CD4-positive, alpha-beta memory T cell (primary cell): ENCODE measurements at regions of chr20 and their contacts with region 1.

Region 1: GRCh38 chr20:9912858-9913434 is 74.1 kb upstream of the PAK5 start:
- DNase-seq: peak in 2 of 5 donors; percentile 2 to 6
- H3K4me3 ChIP-seq: no peak overlapping the region
- H3K4me3 Mint-ChIP-seq: no peak overlapping the region
- H3K27ac ChIP-seq: no peak overlapping the region
- H3K27ac Mint-ChIP-seq: no peak overlapping the region
- H3K4me1 ChIP-seq: no peaks in the 10 kb centered on the region
- H3K4me1 Mint-ChIP-seq: no peaks in the 10 kb centered on the region
- H3K27me3 ChIP-seq: no peaks in the 10 kb centered on the region
- H3K27me3 Mint-ChIP-seq: peaks cover 2 to 14% of the 10 kb centered on the region in 2 donors

Region 2: GRCh38 chr20:9256393-9256792 is 656.6 kb before region 1 on chr20:
- CTCF ChIA-PET with region 1: no interaction called
- POLR2A ChIA-PET with region 1: no interaction called
- intact Hi-C with region 1: no loop called
- DNase-seq: no peak
- H3K4me3 ChIP-seq: no peak overlapping the region
- H3K4me3 Mint-ChIP-seq: no peak overlapping the region
- H3K27ac ChIP-seq: no peak overlapping the region
- H3K27ac Mint-ChIP-seq: no peak overlapping the region
- H3K4me1 ChIP-seq: no peaks in the 10 kb centered on the region
- H3K4me1 Mint-ChIP-seq: no peaks in the 10 kb centered on the region
- H3K27me3 ChIP-seq: no peaks in the 10 kb centered on the region
- H3K27me3 Mint-ChIP-seq: no peaks in the 10 kb centered on the region

Region 3: DNA sequence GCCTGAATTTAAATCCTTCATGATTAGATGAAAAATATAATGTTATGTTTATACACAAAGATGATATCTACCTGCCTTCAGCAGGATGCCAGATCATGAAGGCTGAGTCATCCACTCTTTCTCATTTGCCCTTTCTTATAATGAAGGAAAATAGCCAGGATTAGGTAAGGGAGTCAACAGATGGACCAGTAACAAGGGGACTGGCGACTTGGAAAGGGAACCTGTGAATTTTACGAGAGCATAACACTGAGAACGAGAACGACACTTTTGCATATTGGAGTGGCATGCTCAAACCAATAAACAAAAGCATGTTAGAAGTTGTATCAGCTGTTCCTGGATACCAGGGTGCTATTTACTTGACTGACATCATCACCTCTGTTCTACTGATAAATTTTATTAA is 244.6 kb before region 1 on chr20:
- CTCF ChIA-PET with region 1: no interaction called
- POLR2A ChIA-PET with region 1: no interaction called
- intact Hi-C with region 1: no loop called
- DNase-seq: no peak
- H3K4me3 ChIP-seq: no peak overlapping the region
- H3K4me3 Mint-ChIP-seq: no peak overlapping the region
- H3K27ac ChIP-seq: no peak overlapping the region
- H3K27ac Mint-ChIP-seq: no peak overlapping the region
- H3K4me1 ChIP-seq: no peaks in the 10 kb centered on the region
- H3K4me1 Mint-ChIP-seq: no peaks in the 10 kb centered on the region
- H3K27me3 ChIP-seq: no peaks in the 10 kb centered on the region
- H3K27me3 Mint-ChIP-seq: no peaks in the 10 kb centered on the region

Region 4: DNA sequence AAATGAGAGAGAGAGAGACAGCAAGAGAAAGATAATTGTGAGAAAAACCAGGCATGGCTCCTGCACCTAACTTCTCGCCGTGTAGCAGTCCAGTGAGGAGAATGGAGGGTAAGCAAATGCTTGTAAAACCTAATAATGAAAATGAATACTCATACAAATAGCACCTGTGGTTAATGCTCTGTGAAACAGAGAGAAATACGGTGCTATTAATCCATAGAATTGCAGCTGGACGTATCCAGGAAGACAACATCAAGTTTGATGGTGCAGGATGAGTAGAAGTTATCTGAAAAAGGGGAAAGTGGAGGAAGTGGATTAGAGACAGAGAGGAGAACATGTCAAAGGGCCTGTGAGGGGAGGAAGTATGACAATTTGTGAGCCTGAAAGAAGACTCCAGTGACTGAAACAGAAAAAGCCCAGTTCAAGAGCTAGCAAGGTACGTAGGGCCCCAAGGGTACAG is 15.4 kb after region 1 on chr20:
- CTCF ChIA-PET with region 1: interaction called, 14 read pairs
- POLR2A ChIA-PET with region 1: no interaction called
- intact Hi-C with region 1: no loop called
- DNase-seq: no peak
- H3K4me3 ChIP-seq: no peak overlapping the region
- H3K4me3 Mint-ChIP-seq: no peak overlapping the region
- H3K27ac ChIP-seq: no peak overlapping the region
- H3K27ac Mint-ChIP-seq: no peak overlapping the region
- H3K4me1 ChIP-seq: no peaks in the 10 kb centered on the region
- H3K4me1 Mint-ChIP-seq: no peaks in the 10 kb centered on the region
- H3K27me3 ChIP-seq: no peaks in the 10 kb centered on the region
- H3K27me3 Mint-ChIP-seq: no peaks in the 10 kb centered on the region